WTC11 (cell line): ENCODE measurements at regions of chr11 and their contacts with region 1.

Region 1: DNA sequence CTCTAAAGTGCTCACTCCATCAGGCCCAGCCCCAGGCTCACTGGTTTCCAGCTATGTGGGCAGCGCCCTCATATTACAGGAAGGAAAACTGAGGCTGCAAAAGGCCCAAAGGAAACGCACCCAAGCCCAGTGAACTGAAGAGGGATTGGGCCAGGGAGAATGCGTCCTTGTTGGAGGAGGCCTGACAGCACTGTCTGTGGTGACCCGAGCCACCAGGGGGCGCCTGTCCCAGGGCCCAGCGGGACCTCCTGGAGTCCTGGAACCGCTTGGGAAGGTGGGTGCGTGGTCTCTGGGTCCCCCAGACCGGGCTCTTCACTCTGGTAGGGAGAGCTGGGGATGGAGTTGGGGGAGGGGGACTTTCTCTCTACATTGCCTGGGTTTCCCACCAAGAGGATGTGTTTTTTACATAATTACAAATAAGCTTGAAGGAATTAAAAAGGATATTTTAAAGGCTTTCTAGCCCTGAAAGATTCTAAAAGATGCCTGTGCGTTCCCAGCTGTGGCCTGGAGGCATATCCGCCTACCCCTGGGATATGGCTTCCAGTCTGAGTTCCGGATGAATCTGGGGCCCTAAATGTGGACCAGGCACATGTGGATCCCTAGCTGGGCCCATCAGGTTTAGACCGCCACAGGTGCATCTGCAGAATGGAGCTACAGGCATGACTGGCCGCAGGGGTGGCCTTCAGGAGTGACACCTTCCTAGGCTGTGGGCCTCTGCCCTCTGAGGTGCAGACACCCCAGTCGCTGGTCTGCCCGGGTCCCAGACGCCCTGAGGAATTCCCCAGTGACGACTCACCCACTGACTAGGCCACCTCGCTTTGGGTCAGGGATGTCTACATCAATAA is 4.2 kb downstream of the SPI1 start:
- DNase-seq: peak; percentile 90
- ATAC-seq: peak; percentile 84
- H3K4me3 Mint-ChIP-seq: no peak overlapping the region
- H3K27ac Mint-ChIP-seq: no peak overlapping the region
- H3K4me1 Mint-ChIP-seq: peaks cover 2% of the 10 kb centered on the region; the same call in 1 of the 2 replicates
- H3K27me3 Mint-ChIP-seq: no peaks in the 10 kb centered on the region
- CTCF ChIP-seq: peak; percentile 94

Region 2: GRCh38 chr11:47393150-47394049 is 19.3 kb after region 1 on chr11:
- CTCF ChIA-PET with region 1: interaction called, 20 read pairs
- POLR2A ChIA-PET with region 1: no interaction called
- DNase-seq: no peak
- ATAC-seq: no peak
- H3K4me3 Mint-ChIP-seq: no peak overlapping the region
- H3K27ac Mint-ChIP-seq: no peak overlapping the region
- H3K4me1 Mint-ChIP-seq: peaks cover 9% of the 10 kb centered on the region
- H3K27me3 Mint-ChIP-seq: no peaks in the 10 kb centered on the region
- CTCF ChIP-seq: no peak

Region 3: DNA sequence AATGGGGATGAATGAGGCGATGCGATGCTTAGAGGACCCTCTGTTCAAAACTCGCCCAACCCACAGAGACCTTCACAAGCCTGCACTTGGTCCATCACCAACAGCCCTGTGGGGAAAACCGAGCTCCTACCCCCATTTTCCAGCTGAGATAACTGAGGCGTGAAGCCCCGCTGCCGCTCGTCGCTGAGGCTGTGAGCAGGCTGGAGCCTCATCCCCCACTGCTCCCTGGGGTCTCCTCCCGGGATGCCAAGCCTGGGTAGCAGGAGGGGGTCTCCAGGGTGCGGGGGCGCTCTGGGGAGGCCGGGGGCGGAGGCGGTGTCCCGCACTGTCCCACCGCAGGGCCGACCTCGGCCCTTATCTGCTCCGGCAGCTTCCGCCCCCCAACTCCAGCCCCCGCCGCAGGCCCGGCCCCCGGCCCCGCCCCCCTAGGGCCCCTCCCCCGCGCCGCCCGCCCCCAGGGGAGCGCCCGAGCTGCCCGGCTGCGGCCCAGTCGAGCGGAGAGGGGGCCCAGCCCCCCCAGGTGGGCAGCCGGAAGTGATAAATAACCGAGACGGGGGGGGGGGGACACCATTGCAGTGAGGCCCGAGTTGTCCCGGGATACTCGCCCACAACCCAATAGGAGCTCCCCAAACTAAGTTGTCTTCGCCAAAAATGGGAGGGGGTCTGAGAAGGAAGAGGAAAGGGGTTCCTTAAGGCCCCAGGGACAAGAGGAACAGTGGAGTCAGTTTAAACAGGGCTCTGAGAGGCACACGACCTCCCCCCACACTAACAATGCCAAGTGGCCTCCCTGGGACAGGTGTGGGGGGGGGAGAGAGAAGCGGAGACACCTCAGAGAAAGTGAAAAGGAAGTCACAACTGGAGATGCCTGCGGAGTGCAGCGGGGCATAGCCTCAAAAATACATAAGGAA is 26.0 kb after region 1 on chr11:
- CTCF ChIA-PET with region 1: interaction called, 20 read pairs
- POLR2A ChIA-PET with region 1: interaction called, 3 read pairs
- DNase-seq: peak; percentile 46
- ATAC-seq: peak; percentile 69
- H3K4me3 Mint-ChIP-seq: peak overlapping the region; percentile 79
- H3K27ac Mint-ChIP-seq: peak overlapping the region; percentile 97
- H3K4me1 Mint-ChIP-seq: peaks cover 31% of the 10 kb centered on the region
- H3K27me3 Mint-ChIP-seq: no peaks in the 10 kb centered on the region
- CTCF ChIP-seq: no peak

Region 4: DNA sequence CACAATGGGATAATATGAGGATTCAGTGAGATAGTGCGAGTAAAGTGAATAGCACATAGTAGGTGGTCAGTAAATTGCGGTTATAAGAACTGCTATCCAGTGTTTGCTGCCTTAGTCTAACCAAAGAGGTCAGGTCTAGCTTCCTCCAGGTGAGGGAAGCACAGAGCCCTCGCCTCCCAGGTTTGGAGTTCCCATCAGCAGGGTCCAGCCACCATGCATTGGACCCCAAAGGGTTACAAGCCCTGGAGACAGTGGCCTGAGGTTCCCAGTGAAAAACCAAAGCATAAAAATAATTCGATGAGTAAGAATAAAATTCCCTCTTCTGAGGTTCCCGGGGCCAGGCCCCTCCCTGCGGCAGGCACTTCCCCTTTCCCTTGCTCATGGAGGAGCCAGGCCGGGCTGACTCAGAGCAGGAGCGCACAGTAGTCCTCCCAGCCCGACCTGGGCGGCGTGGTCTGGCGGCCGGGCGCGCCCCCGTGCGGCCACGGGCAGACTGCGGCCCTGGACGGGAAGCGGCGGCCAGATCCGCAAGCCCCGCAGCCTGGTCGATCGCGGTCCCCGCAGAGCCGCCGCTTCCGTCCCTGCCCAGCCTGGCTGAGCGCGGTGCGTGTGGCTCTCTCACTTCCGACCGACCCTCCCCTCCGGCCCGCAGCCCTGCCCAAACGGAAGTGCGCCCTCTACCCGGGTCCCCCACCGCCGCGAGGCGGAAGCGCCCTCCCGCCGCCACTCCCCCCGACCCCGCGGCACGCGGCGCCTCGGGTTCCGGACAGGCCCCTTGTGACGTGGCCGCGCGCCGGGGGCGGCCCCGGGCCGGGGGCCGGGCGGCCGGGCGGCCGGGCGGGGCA is 33.9 kb after region 1 on chr11 and contains the start of gene SLC39A13:
- CTCF ChIA-PET with region 1: interaction called, 33 read pairs
- POLR2A ChIA-PET with region 1: interaction called, 5 read pairs
- DNase-seq: peak; percentile 94
- ATAC-seq: peak; percentile 88
- H3K4me3 Mint-ChIP-seq: peak within 1 kb of the TSS; percentile 95
- H3K27ac Mint-ChIP-seq: peak within 1 kb of the TSS; percentile 99
- H3K4me1 Mint-ChIP-seq: peaks cover 15% of the 10 kb centered on the region
- H3K27me3 Mint-ChIP-seq: no peaks in the 10 kb centered on the region
- CTCF ChIP-seq: peak; percentile 71
- total RNA-seq, gene SLC39A13: 32.8 to 38.2 TPM (median 35.1 TPM) in 3 replicates

Region 5: DNA sequence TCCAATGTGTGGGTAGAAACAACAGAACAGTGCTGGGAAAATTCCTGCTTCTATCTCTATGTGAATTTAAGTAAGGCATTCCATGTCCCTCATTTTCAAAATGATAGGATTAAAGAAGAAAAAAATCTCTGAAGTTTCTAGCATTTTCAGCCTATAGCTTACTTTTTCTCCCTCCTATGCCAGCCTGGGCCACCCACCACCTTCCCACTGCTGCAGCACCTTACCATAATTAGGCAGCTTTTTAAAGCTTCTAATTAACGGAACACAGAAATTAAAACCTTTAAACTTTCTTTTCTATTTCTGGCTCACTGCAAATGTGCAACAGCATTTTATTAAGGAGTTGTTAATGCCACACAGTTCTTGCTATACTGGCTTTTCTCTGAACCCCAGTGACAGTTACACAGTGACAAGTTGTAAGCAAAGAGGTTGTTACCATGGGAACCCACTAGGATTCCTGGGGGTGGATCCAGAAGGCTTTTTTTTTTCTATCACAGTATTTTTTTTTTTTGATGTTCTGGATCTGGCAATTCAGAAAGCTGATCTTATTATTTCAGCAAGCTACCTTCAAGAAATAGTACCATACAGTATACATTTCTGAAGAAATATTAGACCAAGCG is 158.6 kb after region 1 on chr11:
- CTCF ChIA-PET with region 1: no interaction called
- POLR2A ChIA-PET with region 1: no interaction called
- DNase-seq: no peak
- ATAC-seq: no peak
- H3K4me3 Mint-ChIP-seq: no peak overlapping the region
- H3K27ac Mint-ChIP-seq: no peak overlapping the region
- H3K4me1 Mint-ChIP-seq: peaks cover 13% of the 10 kb centered on the region; the same call in 1 of the 2 replicates
- H3K27me3 Mint-ChIP-seq: no peaks in the 10 kb centered on the region
- CTCF ChIP-seq: no peak